Natural killer cell (primary cell): ENCODE measurements at regions of chr19 and their contacts with region 1.

Region 1: GRCh38 chr19:18588611-18589379 is at the start of gene REX1BD:
- DNase-seq: peak; percentile 78 to 93
- ATAC-seq: peak; percentile 79 to 90 (median 80)
- H3K4me3 ChIP-seq: peak within 1 kb of the TSS; percentile 54
- H3K4me3 Mint-ChIP-seq: peak within 1 kb of the TSS; percentile 90
- H3K27ac ChIP-seq: peak within 1 kb of the TSS; percentile 77
- H3K27ac Mint-ChIP-seq: peak within 1 kb of the TSS; percentile 86 to 88
- H3K4me1 ChIP-seq: peaks cover 33% of the 10 kb centered on the region
- H3K4me1 Mint-ChIP-seq: peaks cover 9 to 28% of the 10 kb centered on the region in 2 donors
- H3K27me3 ChIP-seq: no peaks in the 10 kb centered on the region
- H3K27me3 Mint-ChIP-seq: peaks cover 0 to 4% of the 10 kb centered on the region in 2 donors
- CTCF ChIP-seq: peak; percentile 85
- total RNA-seq, gene REX1BD: 80.6 to 86.9 (median 85.3) TPM

Region 2: DNA sequence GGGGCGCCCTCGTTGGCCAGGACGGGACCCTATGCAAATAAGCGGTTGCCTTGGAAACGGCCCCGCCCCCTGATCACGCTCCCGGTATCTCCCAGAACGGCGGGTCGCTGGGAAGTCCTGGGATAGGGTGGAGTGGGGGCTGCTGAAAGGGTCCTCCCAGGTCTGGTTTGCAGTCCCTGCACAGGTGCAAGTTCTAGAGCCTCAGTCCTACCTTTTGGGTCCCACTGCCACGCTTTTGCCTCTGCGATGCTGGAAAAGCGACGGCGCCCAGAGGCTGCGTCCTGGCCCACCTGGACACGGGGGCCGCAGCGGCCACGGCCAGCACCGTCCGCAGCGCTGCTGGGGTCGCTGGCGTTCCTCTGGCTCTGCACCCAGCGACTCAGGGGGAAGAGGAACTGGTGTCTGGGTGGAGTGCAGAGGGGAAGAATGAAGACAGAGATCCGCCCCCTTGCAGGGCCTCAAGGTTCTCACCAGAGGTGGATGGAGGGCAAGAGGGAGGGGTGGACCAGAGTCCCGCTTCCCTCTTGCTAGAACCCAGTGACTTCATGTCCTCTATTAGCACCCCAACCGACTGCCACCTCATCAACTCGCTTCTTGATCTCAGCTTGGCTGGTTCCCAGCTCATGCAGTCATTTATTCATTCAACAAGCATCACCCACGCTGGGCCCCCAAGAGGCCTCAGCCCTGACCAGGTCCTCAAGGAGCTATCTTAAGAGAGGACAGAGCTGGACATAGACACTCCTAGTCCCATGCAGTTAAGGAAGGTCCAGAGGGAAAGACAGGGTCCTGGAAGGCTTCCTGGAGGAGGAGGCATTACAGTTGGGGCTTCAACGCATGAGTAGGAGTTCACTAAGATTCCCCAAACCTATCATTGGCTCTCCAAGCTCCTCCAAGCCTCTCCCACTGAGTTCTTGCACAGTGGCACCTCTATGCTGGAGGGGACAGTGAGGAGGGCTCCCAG is 191.3 kb before region 1 on chr19 and contains the start of gene LRRC25:
- intact Hi-C with region 1: no loop called
- DNase-seq: peak in 1 of 2 donors; percentile 32
- ATAC-seq: peak; percentile 77 to 86 (median 83)
- H3K4me3 ChIP-seq: peak within 1 kb of the TSS; percentile 35
- H3K4me3 Mint-ChIP-seq: peak within 1 kb of the TSS; percentile 70
- H3K27ac ChIP-seq: no peak within 1 kb of the TSS
- H3K27ac Mint-ChIP-seq: peak within 1 kb of the TSS in 1 of 2 donors; percentile 81
- H3K4me1 ChIP-seq: peaks cover 37% of the 10 kb centered on the region
- H3K4me1 Mint-ChIP-seq: peaks cover 11 to 16% of the 10 kb centered on the region in 2 donors
- H3K27me3 ChIP-seq: peaks cover 4% of the 10 kb centered on the region
- H3K27me3 Mint-ChIP-seq: peaks cover 0 to 3% of the 10 kb centered on the region in 2 donors
- CTCF ChIP-seq: no peak
- total RNA-seq, gene LRRC25: 3.9 to 28.2 (median 12.0) TPM

Region 3: DNA sequence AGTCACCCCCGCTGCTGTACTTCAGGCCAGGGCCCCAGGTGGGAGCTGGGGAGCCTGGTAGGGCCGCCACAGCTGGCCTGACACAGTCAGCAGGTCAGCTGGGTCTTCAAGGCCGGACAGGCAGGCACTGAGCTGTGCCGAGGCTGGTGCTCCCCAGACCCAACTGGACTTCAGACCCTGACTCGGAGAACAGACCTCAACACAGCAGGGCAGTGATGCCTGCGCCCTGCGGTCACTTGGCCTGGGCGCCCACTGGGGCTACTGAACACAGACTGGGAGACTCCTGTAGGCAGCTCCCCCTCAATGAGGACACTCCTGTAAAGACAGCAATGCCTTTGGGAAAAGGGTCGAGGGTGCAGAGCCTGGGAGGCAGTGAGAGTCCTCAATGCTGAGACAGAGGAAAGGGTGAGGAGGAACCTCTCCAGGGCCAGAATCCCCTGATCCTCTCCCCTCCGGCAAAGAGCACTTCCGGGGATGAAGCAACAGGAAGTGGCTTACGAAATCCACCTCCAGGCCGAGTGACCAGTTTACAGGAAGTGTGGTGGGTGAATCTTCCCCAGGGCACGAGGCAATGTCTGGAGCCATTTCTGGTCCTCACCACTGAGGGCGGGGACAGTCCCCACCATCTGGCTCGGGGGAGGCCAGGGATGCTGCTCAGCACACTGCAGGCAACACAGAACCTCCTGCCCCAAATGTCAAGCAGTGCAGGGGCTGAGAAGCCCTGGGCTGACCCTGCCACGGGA is 110.1 kb before region 1 on chr19:
- intact Hi-C with region 1: loop called (anchors 5 kb)
- DNase-seq: peak; percentile 43 to 71
- ATAC-seq: peak; percentile 48 to 81 (median 62)
- H3K4me3 ChIP-seq: no peak overlapping the region
- H3K4me3 Mint-ChIP-seq: peak overlapping the region; percentile 82
- H3K27ac ChIP-seq: peak overlapping the region; percentile 77
- H3K27ac Mint-ChIP-seq: peak overlapping the region; percentile 93 to 99
- H3K4me1 ChIP-seq: peaks cover 87% of the 10 kb centered on the region
- H3K4me1 Mint-ChIP-seq: peaks cover 68 to 90% of the 10 kb centered on the region in 2 donors
- H3K27me3 ChIP-seq: no peaks in the 10 kb centered on the region
- H3K27me3 Mint-ChIP-seq: no peaks in the 10 kb centered on the region
- CTCF ChIP-seq: no peak

Region 4: DNA sequence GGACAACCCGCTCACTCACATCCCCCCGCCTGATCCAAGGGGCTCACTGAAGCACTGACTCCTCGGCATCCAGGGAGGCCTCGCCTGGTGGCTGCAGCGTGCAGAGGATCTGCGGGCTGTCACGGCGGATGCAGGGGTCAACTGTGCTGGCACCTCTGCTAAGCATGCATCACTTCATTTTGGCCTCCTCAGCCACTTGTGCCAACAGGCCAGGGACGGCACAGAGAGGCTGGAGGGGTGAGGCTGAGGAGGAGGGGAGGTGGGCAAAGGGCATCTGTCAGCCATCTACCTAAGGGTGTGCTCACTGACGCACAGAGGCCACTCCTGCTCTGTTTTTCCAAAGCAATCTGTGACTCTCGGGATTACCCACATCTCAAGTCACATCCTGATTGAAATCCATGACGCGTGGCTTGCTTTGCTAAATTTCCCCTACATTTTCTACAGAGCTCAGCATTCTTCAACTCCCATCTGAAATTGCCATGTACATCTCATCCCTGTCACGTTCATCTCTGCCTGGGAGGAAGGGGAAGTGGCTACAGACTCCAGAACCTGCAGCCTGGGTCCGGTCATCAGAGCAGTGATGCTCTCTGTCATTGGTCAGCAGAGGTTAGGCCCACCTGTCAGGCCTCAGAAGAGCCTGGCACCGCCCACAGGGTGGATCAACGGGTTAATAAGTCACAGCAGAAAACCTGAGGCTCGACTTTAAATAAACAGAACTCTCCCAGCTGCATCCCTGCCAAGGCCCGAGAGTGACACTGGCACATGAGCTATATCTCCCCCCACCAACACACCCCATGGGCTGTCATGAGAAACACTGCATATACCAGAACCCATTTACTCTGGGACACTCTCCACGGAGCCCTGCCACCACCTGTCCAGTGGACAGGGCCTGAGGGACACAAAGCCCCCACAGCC is 84.6 kb before region 1 on chr19:
- intact Hi-C with region 1: no loop called
- DNase-seq: no peak
- ATAC-seq: no peak
- H3K4me3 ChIP-seq: no peak overlapping the region
- H3K4me3 Mint-ChIP-seq: peak overlapping the region; percentile 17
- H3K27ac ChIP-seq: peak overlapping the region; percentile 0
- H3K27ac Mint-ChIP-seq: peak overlapping the region in 1 of 2 donors; percentile 93
- H3K4me1 ChIP-seq: peaks cover 98% of the 10 kb centered on the region
- H3K4me1 Mint-ChIP-seq: peaks cover 79 to 90% of the 10 kb centered on the region in 2 donors
- H3K27me3 ChIP-seq: no peaks in the 10 kb centered on the region
- H3K27me3 Mint-ChIP-seq: no peaks in the 10 kb centered on the region
- CTCF ChIP-seq: no peak

Region 5: GRCh38 chr19:18571564-18572300 is 17.1 kb before region 1 on chr19 and contains the start of gene UBA52:
- intact Hi-C with region 1: loop called (anchors 2 kb)
- DNase-seq: peak; percentile 99
- ATAC-seq: peak; percentile 88 to 97 (median 91)
- H3K4me3 ChIP-seq: peak within 1 kb of the TSS; percentile 62
- H3K4me3 Mint-ChIP-seq: peak within 1 kb of the TSS; percentile 98
- H3K27ac ChIP-seq: peak within 1 kb of the TSS; percentile 92
- H3K27ac Mint-ChIP-seq: peak within 1 kb of the TSS; percentile 95 to 100
- H3K4me1 ChIP-seq: peaks cover 26% of the 10 kb centered on the region
- H3K4me1 Mint-ChIP-seq: peaks cover 19 to 26% of the 10 kb centered on the region in 2 donors
- H3K27me3 ChIP-seq: no peaks in the 10 kb centered on the region
- H3K27me3 Mint-ChIP-seq: no peaks in the 10 kb centered on the region
- CTCF ChIP-seq: no peak
- total RNA-seq, gene UBA52: 1,016 to 1,271 (median 1,271) TPM

Region 6: DNA sequence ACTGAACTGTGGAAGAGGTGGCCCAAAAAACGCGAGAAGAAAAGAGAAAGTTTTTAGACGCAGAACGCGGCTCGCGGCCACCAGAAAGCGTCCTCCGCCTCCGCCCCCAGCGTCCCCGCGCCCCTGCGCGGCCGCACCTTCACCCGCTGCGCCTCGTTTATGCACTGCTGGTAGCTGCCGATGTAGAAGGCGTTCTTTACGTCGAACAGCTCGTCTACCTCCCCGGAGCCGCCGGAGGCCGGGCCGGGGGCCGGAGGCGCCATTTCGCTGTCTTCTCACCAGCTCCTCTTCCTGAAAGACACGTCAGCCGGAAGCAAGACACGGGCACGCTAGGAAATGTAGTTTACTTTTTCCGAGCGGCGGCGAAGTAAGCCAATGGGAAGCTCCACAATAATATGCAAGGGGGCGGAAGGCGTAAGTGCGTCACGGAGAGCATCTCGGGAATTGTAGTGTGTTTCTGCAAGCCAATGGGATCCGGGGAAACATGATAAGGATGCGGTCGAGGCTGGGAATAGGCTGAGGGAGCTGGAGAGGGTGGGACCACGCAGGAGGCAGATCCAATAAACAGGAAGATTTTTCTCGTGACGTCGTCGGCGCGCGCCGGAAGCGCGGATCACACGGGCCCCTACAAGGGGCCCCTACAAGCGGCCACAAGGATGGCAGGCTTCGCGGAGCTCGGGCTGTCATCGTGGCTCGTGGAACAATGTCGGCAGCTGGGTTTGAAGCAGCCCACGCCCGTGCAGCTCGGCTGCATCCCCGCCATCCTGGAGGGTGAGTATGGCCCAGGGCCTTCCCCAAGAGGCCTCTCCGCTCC is 330.5 kb after region 1 on chr19 and contains the starts of genes COPE and DDX49:
- intact Hi-C with region 1: loop called (anchors 2 kb)
- DNase-seq: peak; percentile 98 to 100
- ATAC-seq: peak; percentile 90 to 98 (median 92)
- H3K4me3 ChIP-seq: peak within 1 kb of the TSS; percentile 72
- H3K4me3 Mint-ChIP-seq: peak within 1 kb of the TSS; percentile 97
- H3K27ac ChIP-seq: peak within 1 kb of the TSS; percentile 85
- H3K27ac Mint-ChIP-seq: peak within 1 kb of the TSS; percentile 90 to 95
- H3K4me1 ChIP-seq: peaks cover 31% of the 10 kb centered on the region
- H3K4me1 Mint-ChIP-seq: peaks cover 31 to 39% of the 10 kb centered on the region in 2 donors
- H3K27me3 ChIP-seq: no peaks in the 10 kb centered on the region
- H3K27me3 Mint-ChIP-seq: no peaks in the 10 kb centered on the region
- CTCF ChIP-seq: no peak
- total RNA-seq, gene COPE: 204 to 228 (median 218) TPM
- total RNA-seq, gene DDX49: 59.3 to 66.9 (median 62.9) TPM